GM12878 (cell line): ENCODE measurements at regions of chr4 and their contacts with region 1.

Region 1: DNA sequence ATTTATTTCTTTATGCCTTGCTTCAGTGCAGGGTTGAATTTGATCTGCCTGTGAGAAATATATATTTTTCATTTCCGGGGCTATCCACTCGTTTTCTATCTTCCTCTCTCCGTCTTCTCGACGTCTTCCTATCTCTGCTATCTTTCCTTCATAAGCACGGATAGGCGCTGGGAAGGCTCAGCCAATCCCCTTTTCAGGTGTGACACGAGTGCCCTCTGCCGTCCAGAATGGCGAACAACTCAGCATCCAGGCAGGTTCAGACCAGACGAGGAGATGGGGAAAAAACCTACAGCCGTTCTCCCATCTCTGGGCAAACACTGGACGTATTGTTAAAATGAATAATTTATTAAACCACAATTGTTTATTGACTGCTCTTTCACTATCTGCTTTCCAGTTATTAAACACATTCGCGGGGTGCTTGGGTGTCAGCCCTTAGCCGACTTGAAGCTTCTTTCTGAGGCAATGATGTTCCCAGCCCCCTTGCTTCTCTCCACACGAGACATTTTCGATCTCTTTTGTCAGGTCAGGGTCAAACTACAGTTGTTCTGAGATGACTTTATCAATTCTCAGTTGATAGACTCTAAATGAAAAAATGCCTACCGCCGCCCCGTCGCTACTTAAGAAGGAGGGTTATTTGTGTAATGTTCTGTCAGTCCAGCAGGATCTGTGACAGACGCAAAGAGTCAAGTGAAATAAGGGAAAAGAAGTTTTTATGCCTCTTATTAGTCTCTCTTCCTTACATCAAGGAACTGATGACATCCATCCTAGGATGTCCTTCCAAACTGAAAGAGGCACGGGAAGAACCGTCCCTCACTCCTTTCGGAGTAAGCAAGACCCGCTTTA is 96.3 kb upstream of the NOCT start:
- DNase-seq: peak; percentile 11
- ATAC-seq: peak; percentile 98
- H3K4me3 ChIP-seq: no peak overlapping the region
- H3K27ac ChIP-seq: no peak overlapping the region
- H3K4me1 ChIP-seq: no peaks in the 10 kb centered on the region
- H3K27me3 ChIP-seq: no peaks in the 10 kb centered on the region
- CTCF ChIP-seq: peak; percentile 82 to 94 (median 88)
- EP300 ChIP-seq: no peak
- POLR2A ChIP-seq: no peak
- RAD21 ChIP-seq: peak; percentile 84

Region 2: GRCh38 chr4:139472852-139473251 is 553.5 kb after region 1 on chr4:
- CTCF ChIA-PET with region 1: no interaction called
- POLR2A ChIA-PET with region 1: interaction called, 10 read pairs
- RAD21 ChIA-PET with region 1: no interaction called
- SMC1A ChIA-PET with region 1: no interaction called
- in situ Hi-C with region 1: no loop called
- intact Hi-C with region 1: no loop called
- DNase-seq: no peak
- ATAC-seq: no peak
- H3K4me3 ChIP-seq: no peak overlapping the region
- H3K27ac ChIP-seq: no peak overlapping the region
- H3K4me1 ChIP-seq: peaks cover 3% of the 10 kb centered on the region; the same call in 1 of the 2 replicates
- H3K27me3 ChIP-seq: no peaks in the 10 kb centered on the region
- CTCF ChIP-seq: no peak
- EP300 ChIP-seq: no peak
- POLR2A ChIP-seq: no peak
- RAD21 ChIP-seq: no peak